GM12878 (cell line): ENCODE measurements at regions of chr17 and their contacts with region 1.

Region 1: DNA sequence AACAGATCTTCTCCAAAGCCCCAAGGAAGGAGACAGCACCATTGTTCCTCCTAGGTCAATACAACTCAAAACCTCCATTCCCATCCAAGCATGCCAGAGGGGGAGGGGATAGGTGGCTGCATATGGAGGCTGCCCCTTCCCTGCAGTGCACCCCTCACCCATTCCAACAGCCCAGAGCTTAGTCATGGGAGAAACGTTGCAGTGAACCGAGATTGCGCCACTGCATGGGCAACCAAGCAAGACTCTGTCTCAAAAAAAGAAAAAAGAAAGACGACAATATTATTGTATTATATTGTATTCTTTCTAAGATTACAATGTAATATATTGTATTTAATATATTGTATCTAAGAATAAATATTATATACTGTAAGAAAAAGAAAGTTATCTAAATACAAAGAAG is 36.4 kb upstream of the CD300E start:
- DNase-seq: no peak
- ATAC-seq: no peak
- H3K4me3 ChIP-seq: no peak overlapping the region
- H3K27ac ChIP-seq: no peak overlapping the region
- H3K4me1 ChIP-seq: 0 out of 2 replicates have a peak, but pooled peaks cover 2% of the 10 kb centered on the region
- H3K27me3 ChIP-seq: peaks cover 0 to 3% of the 10 kb centered on the region in 2 experiments; a peak in 2 of 4 replicates
- CTCF ChIP-seq: no peak
- EP300 ChIP-seq: no peak
- POLR2A ChIP-seq: no peak
- RAD21 ChIP-seq: no peak

Region 2: GRCh38 chr17:74539291-74539820 is 120.5 kb before region 1 on chr17:
- CTCF ChIA-PET with region 1: no interaction called
- POLR2A ChIA-PET with region 1: no interaction called
- RAD21 ChIA-PET with region 1: no interaction called
- SMC1A ChIA-PET with region 1: no interaction called
- in situ Hi-C with region 1: no loop called
- intact Hi-C with region 1: no loop called
- DNase-seq: no peak
- ATAC-seq: no peak
- H3K4me3 ChIP-seq: no peak overlapping the region
- H3K27ac ChIP-seq: no peak overlapping the region
- H3K4me1 ChIP-seq: no peaks in the 10 kb centered on the region
- H3K27me3 ChIP-seq: peaks cover 0 to 2% of the 10 kb centered on the region in 2 experiments; a peak in 2 of 4 replicates
- CTCF ChIP-seq: no peak
- EP300 ChIP-seq: no peak
- POLR2A ChIP-seq: no peak
- RAD21 ChIP-seq: no peak

Region 3: DNA sequence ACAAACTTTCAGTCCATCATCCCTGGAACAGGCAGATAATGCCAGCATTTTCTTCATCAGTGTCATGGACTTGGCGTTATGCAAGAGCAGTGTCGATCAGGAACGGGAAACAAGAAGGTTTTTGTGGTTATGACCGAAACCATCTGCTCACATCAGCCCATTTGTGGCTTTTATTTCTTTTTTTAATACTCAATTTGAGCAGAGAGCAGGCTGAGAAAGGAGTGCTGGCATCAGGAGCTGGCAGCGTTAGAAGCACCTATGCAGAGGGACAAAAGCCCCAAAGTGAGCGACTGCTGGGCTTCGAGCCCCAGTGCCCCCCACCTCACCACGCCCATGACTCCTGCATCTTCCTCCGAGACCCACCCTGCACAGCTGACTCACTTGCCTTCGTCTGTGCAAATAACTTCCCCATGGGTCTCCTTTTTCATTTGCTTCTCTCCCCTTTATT is 20.2 kb before region 1 on chr17:
- CTCF ChIA-PET with region 1: interaction called, 12 read pairs
- POLR2A ChIA-PET with region 1: interaction called, 3 read pairs
- RAD21 ChIA-PET with region 1: interaction called, 7 read pairs
- SMC1A ChIA-PET with region 1: no interaction called
- in situ Hi-C with region 1: no loop called
- intact Hi-C with region 1: no loop called
- DNase-seq: peak; percentile 42
- ATAC-seq: peak; percentile 58
- H3K4me3 ChIP-seq: no peak overlapping the region
- H3K27ac ChIP-seq: no peak overlapping the region
- H3K4me1 ChIP-seq: peaks cover 35% of the 10 kb centered on the region
- H3K27me3 ChIP-seq: peaks cover 0 to 2% of the 10 kb centered on the region in 2 experiments; a peak in 2 of 4 replicates
- CTCF ChIP-seq: no peak
- EP300 ChIP-seq: no peak
- POLR2A ChIP-seq: no peak
- RAD21 ChIP-seq: no peak

Region 4: GRCh38 chr17:74671031-74671771 is 11.3 kb after region 1 on chr17:
- CTCF ChIA-PET with region 1: interaction called, 18 read pairs
- POLR2A ChIA-PET with region 1: no interaction called
- RAD21 ChIA-PET with region 1: interaction called, 4 read pairs
- SMC1A ChIA-PET with region 1: interaction called, 8 read pairs
- in situ Hi-C with region 1: no loop called
- intact Hi-C with region 1: no loop called
- DNase-seq: no peak
- ATAC-seq: no peak; the same call in 2 of the 3 replicates
- H3K4me3 ChIP-seq: no peak overlapping the region
- H3K27ac ChIP-seq: no peak overlapping the region
- H3K4me1 ChIP-seq: no peaks in the 10 kb centered on the region
- H3K27me3 ChIP-seq: peaks cover 0 to 7% of the 10 kb centered on the region in 2 experiments; a peak in 2 of 4 replicates
- CTCF ChIP-seq: no peak
- EP300 ChIP-seq: no peak
- POLR2A ChIP-seq: no peak
- RAD21 ChIP-seq: no peak

Region 5: DNA sequence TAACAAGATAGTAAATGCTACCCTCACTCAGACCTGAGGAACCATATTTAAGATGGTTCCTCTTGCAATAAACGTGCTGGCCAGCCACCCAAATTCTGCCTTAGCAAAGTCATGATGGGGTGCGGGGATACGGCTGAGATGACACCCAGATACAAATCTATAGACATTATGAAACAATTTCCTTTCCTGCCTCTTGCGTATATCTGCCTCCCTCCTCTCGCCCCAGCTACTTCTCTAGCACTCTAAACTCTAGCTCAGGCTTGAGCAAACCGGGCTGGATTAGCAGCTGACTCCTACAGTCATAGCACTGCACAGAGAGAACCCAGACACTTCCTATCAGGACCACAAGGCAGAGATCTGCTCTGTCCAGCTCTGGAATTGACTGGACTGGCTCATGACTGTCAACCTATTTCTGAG is 30.5 kb after region 1 on chr17:
- CTCF ChIA-PET with region 1: interaction called, 20 read pairs
- POLR2A ChIA-PET with region 1: interaction called, 3 read pairs
- RAD21 ChIA-PET with region 1: interaction called, 6 read pairs
- SMC1A ChIA-PET with region 1: interaction called, 14 read pairs
- in situ Hi-C with region 1: no loop called
- intact Hi-C with region 1: no loop called
- DNase-seq: no peak
- ATAC-seq: no peak
- H3K4me3 ChIP-seq: no peak overlapping the region
- H3K27ac ChIP-seq: no peak overlapping the region
- H3K4me1 ChIP-seq: peaks cover 21% of the 10 kb centered on the region
- H3K27me3 ChIP-seq: no peaks in the 10 kb centered on the region; a peak in 1 of 4 replicates
- CTCF ChIP-seq: no peak
- EP300 ChIP-seq: no peak
- POLR2A ChIP-seq: no peak
- RAD21 ChIP-seq: no peak

Region 6: DNA sequence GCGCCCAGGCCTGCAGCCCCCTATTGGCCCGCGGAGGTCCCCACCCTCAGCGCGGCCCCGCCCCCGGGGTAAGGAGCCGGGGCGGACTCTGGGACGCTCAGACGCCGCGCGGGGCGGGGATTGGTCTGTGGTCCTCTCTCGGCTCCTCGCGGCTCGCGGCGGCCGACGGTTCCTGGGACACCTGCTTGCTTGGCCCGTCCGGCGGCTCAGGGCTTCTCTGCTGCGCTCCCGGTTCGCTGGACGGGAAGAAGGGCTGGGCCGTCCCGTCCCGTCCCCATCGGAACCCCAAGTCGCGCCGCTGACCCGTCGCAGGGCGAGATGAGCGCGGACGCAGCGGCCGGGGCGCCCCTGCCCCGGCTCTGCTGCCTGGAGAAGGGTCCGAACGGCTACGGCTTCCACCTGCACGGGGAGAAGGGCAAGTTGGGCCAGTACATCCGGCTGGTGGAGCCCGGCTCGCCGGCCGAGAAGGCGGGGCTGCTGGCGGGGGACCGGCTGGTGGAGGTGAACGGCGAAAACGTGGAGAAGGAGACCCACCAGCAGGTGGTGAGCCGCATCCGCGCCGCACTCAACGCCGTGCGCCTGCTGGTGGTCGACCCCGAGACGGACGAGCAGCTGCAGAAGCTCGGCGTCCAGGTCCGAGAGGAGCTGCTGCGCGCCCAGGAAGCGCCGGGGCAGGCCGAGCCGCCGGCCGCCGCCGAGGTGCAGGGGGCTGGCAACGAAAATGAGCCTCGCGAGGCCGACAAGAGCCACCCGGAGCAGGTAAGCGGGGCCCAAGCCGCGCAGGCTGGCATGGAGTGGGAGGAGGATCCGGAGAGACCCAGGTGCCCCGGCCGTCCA is 88.8 kb after region 1 on chr17 and contains the start of gene NHERF1:
- CTCF ChIA-PET with region 1: interaction called, 30 read pairs
- POLR2A ChIA-PET with region 1: interaction called, 3 read pairs
- RAD21 ChIA-PET with region 1: interaction called, 20 read pairs
- SMC1A ChIA-PET with region 1: interaction called, 10 read pairs
- in situ Hi-C with region 1: no loop called
- intact Hi-C with region 1: no loop called
- DNase-seq: peak; percentile 60
- ATAC-seq: peak; percentile 96
- H3K4me3 ChIP-seq: peak within 1 kb of the TSS; percentile 96
- H3K27ac ChIP-seq: peak within 1 kb of the TSS; percentile 64
- H3K4me1 ChIP-seq: peaks cover 6% of the 10 kb centered on the region
- H3K27me3 ChIP-seq: no peaks in the 10 kb centered on the region
- CTCF ChIP-seq: peak; percentile 10 to 19 (median 14); a peak in 1 of 6 replicates
- EP300 ChIP-seq: no peak
- POLR2A ChIP-seq: peak; percentile 99
- RAD21 ChIP-seq: no peak
- polyA plus RNA-seq, gene NHERF1: 13.4 to 14.3 TPM

Region 7: GRCh38 chr17:74770498-74771318 is 110.8 kb after region 1 on chr17:
- CTCF ChIA-PET with region 1: interaction called, 25 read pairs
- POLR2A ChIA-PET with region 1: no interaction called
- RAD21 ChIA-PET with region 1: interaction called, 10 read pairs
- SMC1A ChIA-PET with region 1: interaction called, 13 read pairs
- in situ Hi-C with region 1: no loop called
- intact Hi-C with region 1: no loop called
- DNase-seq: no peak
- ATAC-seq: peak; percentile 90
- H3K4me3 ChIP-seq: no peak overlapping the region
- H3K27ac ChIP-seq: no peak overlapping the region
- H3K4me1 ChIP-seq: 0 out of 2 replicates have a peak, but pooled peaks cover 3% of the 10 kb centered on the region
- H3K27me3 ChIP-seq: no peaks in the 10 kb centered on the region
- CTCF ChIP-seq: peak; percentile 81 to 85 (median 82)
- EP300 ChIP-seq: no peak
- POLR2A ChIP-seq: peak; percentile 33; the same call in 1 of the 2 replicates
- RAD21 ChIP-seq: peak; percentile 88

Region 8: DNA sequence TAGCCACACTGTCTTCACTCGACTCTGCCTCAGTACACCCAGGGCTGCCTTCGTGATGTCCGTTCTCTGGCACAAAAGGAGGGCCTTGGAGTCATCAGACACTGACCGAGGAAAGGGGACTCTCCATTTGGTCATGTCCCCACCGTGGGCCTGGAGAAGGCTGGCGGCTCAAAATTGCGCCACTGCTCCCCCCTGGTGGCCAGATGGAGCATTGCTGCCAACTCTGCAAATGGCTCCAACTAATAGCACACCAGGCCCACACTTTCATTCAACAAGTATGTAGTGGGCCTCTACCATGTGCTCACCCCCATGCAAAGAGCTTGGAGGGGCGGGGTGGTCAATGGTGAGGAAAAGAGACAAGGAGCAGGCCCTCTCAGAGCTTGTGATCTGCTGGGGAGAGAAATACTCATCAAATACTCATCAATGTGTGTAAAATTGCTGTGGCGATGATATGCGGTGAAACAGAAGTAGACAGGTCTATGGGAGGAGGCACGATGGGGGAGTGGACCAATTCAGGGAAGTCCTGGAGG is 205.0 kb after region 1 on chr17:
- CTCF ChIA-PET with region 1: interaction called, 21 read pairs
- POLR2A ChIA-PET with region 1: interaction called, 3 read pairs
- RAD21 ChIA-PET with region 1: interaction called, 21 read pairs
- SMC1A ChIA-PET with region 1: interaction called, 5 read pairs
- in situ Hi-C with region 1: no loop called
- intact Hi-C with region 1: loop called (anchors 2 kb)
- DNase-seq: no peak
- ATAC-seq: peak; percentile 81
- H3K4me3 ChIP-seq: no peak overlapping the region
- H3K27ac ChIP-seq: no peak overlapping the region
- H3K4me1 ChIP-seq: peaks cover 4% of the 10 kb centered on the region; the same call in 1 of the 2 replicates
- H3K27me3 ChIP-seq: peaks cover 5 to 8% of the 10 kb centered on the region in 2 experiments
- CTCF ChIP-seq: peak; percentile 91 to 98 (median 97)
- EP300 ChIP-seq: no peak
- POLR2A ChIP-seq: no peak
- RAD21 ChIP-seq: peak; percentile 71